Mucosa of descending colon (tissue), 3 donors: ENCODE measurements at regions of chr12 and their contacts with region 1.

Region 1: DNA sequence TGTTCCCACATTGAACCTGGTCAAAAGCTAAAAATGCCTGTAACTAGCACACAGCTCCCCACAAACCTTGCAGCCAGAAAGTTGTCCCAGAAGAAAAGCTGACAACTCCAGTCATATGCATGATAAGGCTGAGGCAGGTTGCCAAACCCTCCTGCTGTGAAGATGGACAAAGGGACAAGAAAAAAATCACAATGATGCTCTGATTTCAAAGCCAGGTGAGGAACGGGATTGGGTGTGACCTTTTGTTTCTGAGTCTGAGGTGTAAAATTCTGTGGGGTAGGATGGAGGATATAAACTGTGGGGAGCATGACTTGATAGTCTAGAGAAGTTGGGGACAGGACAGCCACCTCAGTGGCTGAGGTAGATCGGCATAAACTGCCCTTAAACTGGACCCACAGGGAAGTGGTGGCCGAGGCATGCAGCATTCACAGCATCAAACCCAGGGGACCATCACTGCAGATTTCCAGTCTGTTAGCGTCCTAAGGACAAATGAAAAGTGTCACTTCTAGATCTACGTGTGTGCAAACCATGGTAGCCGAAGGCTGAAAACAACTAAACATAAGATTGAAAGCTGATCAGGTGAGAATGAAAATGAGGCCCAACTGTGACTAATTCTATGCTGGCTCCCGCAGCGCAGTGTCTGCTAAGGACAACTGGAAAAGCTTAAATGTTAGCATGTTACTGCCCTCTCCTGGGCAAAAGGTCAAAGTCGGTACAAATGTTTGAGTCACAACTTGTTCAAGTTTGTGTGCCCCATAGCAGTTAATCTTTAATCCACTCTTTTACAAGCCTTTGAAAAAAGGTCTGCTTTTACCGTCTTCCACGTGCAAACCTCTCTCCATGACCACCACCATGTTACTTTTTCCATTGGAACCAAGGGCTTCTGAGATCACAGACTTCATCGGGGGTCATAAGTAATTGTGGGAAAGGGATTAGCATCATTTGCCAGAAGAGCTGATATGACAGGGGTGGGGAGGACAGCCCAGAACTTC is 39.8 kb downstream of the GRIN2B start:
- DNase-seq: peak; percentile 50 to 86 (median 53)
- ATAC-seq: peak; percentile 100
- H3K4me3 ChIP-seq: no peak overlapping the region
- H3K4me1 ChIP-seq: no peaks in the 10 kb centered on the region
- CTCF ChIP-seq: no peak

Region 2: GRCh38 chr12:13465635-13466034 is 475.9 kb before region 1 on chr12:
- intact Hi-C with region 1: no loop called
- DNase-seq: no peak
- ATAC-seq: no peak
- H3K4me3 ChIP-seq: no peak overlapping the region
- H3K4me1 ChIP-seq: no peaks in the 10 kb centered on the region
- CTCF ChIP-seq: no peak

Region 3: DNA sequence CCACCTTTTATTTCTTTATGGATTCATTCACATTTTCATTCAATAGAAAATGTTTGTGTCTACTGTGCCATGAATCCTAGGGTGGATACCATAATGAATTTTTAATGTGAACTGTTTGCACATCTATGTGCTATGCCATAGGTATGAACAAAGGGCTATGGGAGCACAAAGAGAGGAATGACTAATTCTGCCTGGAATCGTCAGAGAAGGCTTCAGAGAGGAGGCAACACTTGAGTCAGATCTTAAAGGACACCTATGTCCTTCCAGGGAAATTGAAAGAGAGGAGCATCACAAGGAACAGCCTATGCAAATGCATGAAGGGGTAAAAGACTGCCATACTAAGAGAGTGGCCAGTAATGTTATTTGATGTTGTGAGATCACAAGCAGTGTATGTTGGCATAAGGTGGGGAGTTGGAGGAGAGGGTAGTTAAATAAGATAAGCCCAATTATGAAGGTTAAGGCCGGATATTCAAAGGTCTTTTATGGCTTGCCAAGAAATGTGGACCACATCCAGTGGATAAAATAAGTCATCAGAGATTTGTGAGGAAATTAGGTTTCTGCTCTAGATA is 206.9 kb before region 1 on chr12:
- intact Hi-C with region 1: loop called in 1 of 2 experiments (anchors 10 kb)
- DNase-seq: no peak
- ATAC-seq: peak; percentile 78
- H3K4me3 ChIP-seq: no peak overlapping the region
- H3K4me1 ChIP-seq: no peaks in the 10 kb centered on the region
- CTCF ChIP-seq: no peak